ENCODE measurements at regions of chr6 and their contacts with region 1.

Region 1: GRCh38 chr6:31945507-31946369 is at the start of gene CFB:
- DNase-seq: peak; percentile 98
- H3K4me3 Mint-ChIP-seq: peak within 1 kb of the TSS; percentile 77
- H3K27ac Mint-ChIP-seq: peak within 1 kb of the TSS; percentile 84
- H3K4me1 Mint-ChIP-seq: peaks cover 84% of the 10 kb centered on the region
- H3K27me3 Mint-ChIP-seq: no peaks in the 10 kb centered on the region
- CTCF ChIP-seq: no peak
- total RNA-seq, gene CFB: 944 and 1,205 TPM in 2 replicates

Region 2: GRCh38 chr6:31493875-31494694 is 451.7 kb before region 1 on chr6:
- CTCF ChIA-PET with region 1: no interaction called
- intact Hi-C with region 1: no loop called
- DNase-seq: peak; percentile 94
- H3K4me3 Mint-ChIP-seq: peak overlapping the region; percentile 56
- H3K27ac Mint-ChIP-seq: peak overlapping the region; percentile 0
- H3K4me1 Mint-ChIP-seq: peaks cover 42% of the 10 kb centered on the region
- H3K27me3 Mint-ChIP-seq: no peaks in the 10 kb centered on the region
- CTCF ChIP-seq: peak; percentile 78

Region 3: DNA sequence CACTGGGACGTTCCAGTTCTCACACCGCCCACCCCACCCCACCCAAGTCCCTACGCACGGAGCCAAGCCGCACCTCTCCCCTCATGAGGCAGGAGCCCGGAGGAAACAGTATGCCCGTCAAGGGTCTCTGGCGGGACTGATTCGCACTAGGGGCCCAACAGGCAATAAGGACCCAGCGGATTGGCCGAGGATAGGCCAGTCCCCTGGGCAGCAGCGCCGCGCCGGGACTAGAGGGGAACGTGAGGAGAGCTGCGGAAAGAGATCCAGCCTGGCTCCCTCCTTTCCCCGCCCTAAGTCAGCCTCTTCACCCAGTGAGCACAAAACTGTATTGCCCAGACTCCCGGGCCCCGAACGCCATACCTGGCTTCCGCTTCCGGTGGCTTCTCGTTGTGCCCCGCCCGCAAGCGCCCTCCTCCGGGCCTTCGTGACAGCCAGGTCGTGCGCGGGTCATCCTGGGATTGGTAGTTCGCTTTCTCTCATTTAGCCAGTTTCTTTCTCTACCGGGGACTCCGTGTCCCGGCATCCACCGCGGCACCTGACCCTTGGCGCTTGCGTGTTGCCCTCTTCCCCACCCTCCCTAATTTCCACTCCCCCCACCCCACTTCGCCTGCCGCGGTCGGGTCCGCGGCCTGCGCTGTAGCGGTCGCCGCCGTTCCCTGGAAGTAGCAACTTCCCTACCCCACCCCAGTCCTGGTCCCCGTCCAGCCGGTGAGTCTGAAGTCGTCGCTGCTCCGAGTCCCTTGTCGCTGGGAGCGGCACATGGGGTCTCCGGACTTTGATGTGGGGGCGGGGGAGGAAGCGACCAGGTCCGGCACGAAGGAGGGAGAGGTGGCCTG is 280.0 kb before region 1 on chr6 and contains the start of gene CSNK2B:
- CTCF ChIA-PET with region 1: no interaction called
- intact Hi-C with region 1: loop called (anchors 1 kb)
- DNase-seq: peak; percentile 100
- H3K4me3 Mint-ChIP-seq: peak within 1 kb of the TSS; percentile 92
- H3K27ac Mint-ChIP-seq: peak within 1 kb of the TSS; percentile 91
- H3K4me1 Mint-ChIP-seq: peaks cover 49% of the 10 kb centered on the region
- H3K27me3 Mint-ChIP-seq: no peaks in the 10 kb centered on the region
- CTCF ChIP-seq: no peak
- total RNA-seq, gene CSNK2B: 337 and 357 TPM in 2 replicates

Region 4: GRCh38 chr6:31851485-31851832 is 94.3 kb before region 1 on chr6:
- CTCF ChIA-PET with region 1: no interaction called
- intact Hi-C with region 1: no loop called
- DNase-seq: no peak
- H3K4me3 Mint-ChIP-seq: no peak overlapping the region
- H3K27ac Mint-ChIP-seq: peak overlapping the region; percentile 1
- H3K4me1 Mint-ChIP-seq: peaks cover 12% of the 10 kb centered on the region
- H3K27me3 Mint-ChIP-seq: no peaks in the 10 kb centered on the region
- CTCF ChIP-seq: no peak